ENCODE measurements at regions of chr10 and their contacts with region 1.

Region 1: DNA sequence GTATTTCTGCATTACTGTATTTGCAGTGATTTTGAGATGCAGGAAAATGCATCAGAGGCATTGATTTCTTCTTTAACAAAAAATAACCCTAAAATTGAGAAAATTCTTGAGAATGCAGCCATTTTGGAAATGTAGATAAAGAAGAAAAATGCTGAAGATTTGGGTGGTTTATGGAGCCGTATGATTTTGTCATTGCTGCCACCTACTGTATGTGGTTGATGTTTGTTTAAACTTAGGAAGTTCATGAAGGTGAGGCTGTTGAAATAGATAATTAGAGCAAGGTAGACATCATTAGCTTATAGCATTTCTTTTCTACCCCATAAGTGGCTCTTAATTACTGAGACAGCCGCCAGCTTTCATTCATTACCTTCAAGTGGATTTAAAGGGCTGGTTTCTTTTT is 92.1 kb upstream of the SAMD8 start:
- DNase-seq: no peak
- ATAC-seq: peak; percentile 78
- H3K4me3 ChIP-seq: no peak overlapping the region
- H3K27ac ChIP-seq: no peak overlapping the region
- H3K4me1 ChIP-seq: peaks cover 16% of the 10 kb centered on the region
- H3K27me3 ChIP-seq: no peaks in the 10 kb centered on the region
- CTCF ChIP-seq: peak; percentile 33 to 70 (median 43); a peak in 4 of 6 replicates
- EP300 ChIP-seq: no peak
- POLR2A ChIP-seq: no peak
- RAD21 ChIP-seq: peak; percentile 84

Region 2: DNA sequence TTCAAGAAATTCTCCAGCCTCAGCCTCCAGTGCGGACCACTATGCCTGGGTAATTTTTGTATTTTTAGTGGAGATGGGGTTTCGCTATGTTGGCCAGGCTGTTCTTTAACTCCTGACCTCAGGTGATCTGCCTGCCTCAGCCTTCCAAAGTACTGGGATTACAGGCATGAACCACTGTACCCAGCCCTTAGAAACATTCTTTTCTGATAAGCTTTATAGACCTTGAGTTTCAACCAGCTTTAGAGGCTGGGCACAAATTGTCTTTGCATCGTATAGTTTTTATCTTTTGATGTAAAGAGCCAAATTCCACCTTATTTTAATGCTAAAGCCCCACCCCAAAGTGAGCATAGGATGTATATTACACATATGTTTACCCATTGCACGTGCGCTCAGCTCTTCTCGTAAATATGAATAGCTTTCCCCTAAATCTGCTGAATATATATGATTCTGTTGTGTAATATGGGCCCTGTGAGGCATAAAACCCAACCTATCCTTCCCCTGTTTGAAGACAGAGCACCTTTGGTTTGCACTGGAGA is 743.5 kb before region 1 on chr10:
- CTCF ChIA-PET with region 1: interaction called, 10 read pairs
- POLR2A ChIA-PET with region 1: no interaction called
- RAD21 ChIA-PET with region 1: interaction called, 4 read pairs
- SMC1A ChIA-PET with region 1: interaction called, 29 read pairs
- in situ Hi-C with region 1: no loop called
- intact Hi-C with region 1: no loop called
- DNase-seq: no peak
- ATAC-seq: no peak
- H3K4me3 ChIP-seq: no peak overlapping the region
- H3K27ac ChIP-seq: no peak overlapping the region
- H3K4me1 ChIP-seq: no peaks in the 10 kb centered on the region
- H3K27me3 ChIP-seq: no peaks in the 10 kb centered on the region
- CTCF ChIP-seq: no peak
- EP300 ChIP-seq: no peak
- POLR2A ChIP-seq: no peak
- RAD21 ChIP-seq: no peak

Region 3: GRCh38 chr10:74677951-74678350 is 341.4 kb before region 1 on chr10:
- CTCF ChIA-PET with region 1: interaction called, 10 read pairs
- POLR2A ChIA-PET with region 1: no interaction called
- RAD21 ChIA-PET with region 1: interaction called, 6 read pairs
- SMC1A ChIA-PET with region 1: interaction called, 11 read pairs
- in situ Hi-C with region 1: no loop called
- intact Hi-C with region 1: loop called (anchors 10 kb)
- DNase-seq: peak; percentile 74
- ATAC-seq: peak; percentile 93
- H3K4me3 ChIP-seq: no peak overlapping the region
- H3K27ac ChIP-seq: peak overlapping the region; percentile 52; the same call in 1 of the 2 replicates
- H3K4me1 ChIP-seq: peaks cover 41% of the 10 kb centered on the region
- H3K27me3 ChIP-seq: no peaks in the 10 kb centered on the region
- CTCF ChIP-seq: 0 out of 6 replicates have a peak, but pooled peaks of 1 of the 3 experiments have one; percentile 6
- EP300 ChIP-seq: no peak; a peak in 1 of 4 replicates
- POLR2A ChIP-seq: no peak
- RAD21 ChIP-seq: peak; percentile 26; the same call in 1 of the 2 replicates

Region 4: GRCh38 chr10:74728225-74728624 is 291.1 kb before region 1 on chr10:
- CTCF ChIA-PET with region 1: no interaction called
- POLR2A ChIA-PET with region 1: no interaction called
- RAD21 ChIA-PET with region 1: no interaction called
- SMC1A ChIA-PET with region 1: no interaction called
- in situ Hi-C with region 1: no loop called
- intact Hi-C with region 1: no loop called
- DNase-seq: no peak
- ATAC-seq: no peak
- H3K4me3 ChIP-seq: no peak overlapping the region
- H3K27ac ChIP-seq: no peak overlapping the region
- H3K4me1 ChIP-seq: no peaks in the 10 kb centered on the region
- H3K27me3 ChIP-seq: no peaks in the 10 kb centered on the region
- CTCF ChIP-seq: no peak
- EP300 ChIP-seq: no peak
- POLR2A ChIP-seq: no peak
- RAD21 ChIP-seq: no peak

Region 5: GRCh38 chr10:74826142-74827044 is 193.0 kb before region 1 on chr10 and contains the start of gene KAT6B:
- CTCF ChIA-PET with region 1: interaction called, 6 read pairs
- POLR2A ChIA-PET with region 1: no interaction called
- RAD21 ChIA-PET with region 1: interaction called, 12 read pairs
- SMC1A ChIA-PET with region 1: interaction called, 10 read pairs
- in situ Hi-C with region 1: no loop called
- intact Hi-C with region 1: loop called (anchors 2 kb)
- DNase-seq: peak; percentile 100
- ATAC-seq: peak; percentile 90
- H3K4me3 ChIP-seq: peak within 1 kb of the TSS; percentile 93
- H3K27ac ChIP-seq: peak within 1 kb of the TSS; percentile 91
- H3K4me1 ChIP-seq: peaks cover 9% of the 10 kb centered on the region; the same call in 1 of the 2 replicates
- H3K27me3 ChIP-seq: no peaks in the 10 kb centered on the region
- CTCF ChIP-seq: peak; percentile 11 to 41 (median 17); a peak in 3 of 6 replicates
- EP300 ChIP-seq: 0 out of 4 replicates have a peak, but pooled peaks of 1 of the 2 experiments have one; percentile 34
- POLR2A ChIP-seq: peak; percentile 87
- RAD21 ChIP-seq: no peak; the same call in 1 of the 2 replicates
- polyA plus RNA-seq, gene KAT6B: 2.7 to 5.3 TPM

Region 6: DNA sequence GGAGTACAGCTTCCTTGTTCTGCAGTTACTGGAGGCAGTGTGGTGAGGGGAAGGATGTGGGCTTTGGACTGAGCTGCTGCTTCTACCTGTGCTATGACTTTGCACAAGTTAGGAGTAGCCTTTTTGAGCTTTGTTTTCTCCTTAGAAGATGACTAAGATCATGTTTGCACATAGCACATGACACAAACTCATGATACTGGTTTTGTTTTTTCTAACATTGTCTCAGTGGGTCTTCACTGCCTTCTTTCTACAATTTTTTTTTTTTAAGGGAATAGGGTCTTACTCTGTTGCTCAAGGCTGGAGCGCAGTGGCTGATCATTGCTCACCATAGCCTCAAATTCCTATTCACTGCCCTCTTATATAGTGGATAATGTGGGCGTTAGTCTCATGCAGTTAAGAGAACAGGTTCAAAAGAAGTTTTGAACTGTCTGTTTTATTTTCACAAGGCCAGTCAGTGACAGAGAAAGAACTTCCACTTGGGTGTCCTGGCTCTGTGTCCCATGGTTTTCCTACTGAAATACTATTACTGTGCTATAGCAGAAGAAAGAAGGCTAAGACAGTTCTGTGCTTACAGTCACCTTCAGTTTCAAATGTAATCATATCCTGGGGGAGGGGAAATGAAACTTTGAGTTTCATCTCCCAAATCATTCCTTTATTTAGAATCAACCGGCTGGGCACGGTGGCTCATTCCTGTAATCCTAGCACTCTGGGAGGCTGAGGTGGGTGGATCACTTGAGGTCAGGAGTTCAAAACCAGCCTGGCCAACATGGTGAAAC is 121.0 kb before region 1 on chr10:
- CTCF ChIA-PET with region 1: interaction called, 5 read pairs
- POLR2A ChIA-PET with region 1: no interaction called
- RAD21 ChIA-PET with region 1: interaction called, 5 read pairs
- SMC1A ChIA-PET with region 1: interaction called, 19 read pairs
- in situ Hi-C with region 1: no loop called
- intact Hi-C with region 1: loop called (anchors 5 kb)
- DNase-seq: peak; percentile 67
- ATAC-seq: peak; percentile 80
- H3K4me3 ChIP-seq: no peak overlapping the region; the same call in 1 of the 2 replicates
- H3K27ac ChIP-seq: peak overlapping the region; percentile 87
- H3K4me1 ChIP-seq: peaks cover 42% of the 10 kb centered on the region
- H3K27me3 ChIP-seq: no peaks in the 10 kb centered on the region
- CTCF ChIP-seq: no peak
- EP300 ChIP-seq: no peak; a peak in 2 of 4 replicates
- POLR2A ChIP-seq: peak; percentile 48
- RAD21 ChIP-seq: no peak

Region 7: DNA sequence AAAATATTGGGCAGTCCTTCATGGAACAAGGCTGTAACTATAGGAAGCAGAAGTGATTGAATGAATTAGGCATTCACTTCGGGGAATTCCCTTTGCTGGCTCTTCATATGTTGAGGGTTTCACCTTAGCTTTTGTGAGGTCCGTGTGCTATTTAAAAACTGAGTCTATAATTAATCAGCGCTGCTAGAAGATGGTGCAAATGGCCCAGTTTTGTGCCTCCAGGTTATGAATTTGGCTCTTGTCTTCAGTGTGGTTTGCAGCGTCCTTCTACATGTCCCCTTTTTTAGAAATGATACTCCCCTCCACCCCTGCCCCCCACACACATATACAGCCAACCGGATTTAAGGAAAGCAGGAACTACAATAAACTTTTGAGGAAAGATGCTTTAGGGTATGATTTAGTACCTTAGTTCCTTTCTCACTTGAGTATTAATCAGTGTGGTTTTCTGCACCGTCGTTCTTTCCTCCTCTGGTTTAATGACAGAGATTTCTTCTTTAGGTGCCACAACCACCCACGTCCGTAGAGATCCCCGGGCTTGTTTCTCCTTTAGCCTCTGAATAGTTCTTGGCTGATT is 18.5 kb before region 1 on chr10:
- CTCF ChIA-PET with region 1: interaction called, 23 read pairs
- POLR2A ChIA-PET with region 1: interaction called, 4 read pairs
- RAD21 ChIA-PET with region 1: interaction called, 38 read pairs
- SMC1A ChIA-PET with region 1: interaction called, 185 read pairs
- in situ Hi-C with region 1: no loop called
- intact Hi-C with region 1: no loop called
- DNase-seq: no peak
- ATAC-seq: peak; percentile 93
- H3K4me3 ChIP-seq: peak overlapping the region; percentile 46
- H3K27ac ChIP-seq: peak overlapping the region; percentile 82
- H3K4me1 ChIP-seq: peaks cover 21% of the 10 kb centered on the region
- H3K27me3 ChIP-seq: no peaks in the 10 kb centered on the region
- CTCF ChIP-seq: no peak
- EP300 ChIP-seq: no peak; a peak in 1 of 4 replicates
- POLR2A ChIP-seq: no peak
- RAD21 ChIP-seq: no peak